ENCODE measurements at regions of chr11 and their contacts with region 1.

Region 1: GRCh38 chr11:12540913-12541582 is 133.2 kb upstream of the TEAD1 start:
- DNase-seq: peak; percentile 87
- H3K4me3 ChIP-seq: no peak overlapping the region; the same call in 1 of the 2 replicates
- H3K27ac ChIP-seq: peak overlapping the region; percentile 99
- H3K27me3 ChIP-seq: no peaks in the 10 kb centered on the region
- CTCF ChIP-seq: peak; percentile 65

Region 2: GRCh38 chr11:12478743-12479142 is 62.3 kb before region 1 on chr11:
- CTCF ChIA-PET with region 1: no interaction called
- POLR2A ChIA-PET with region 1: no interaction called
- DNase-seq: no peak
- H3K4me3 ChIP-seq: no peak overlapping the region
- H3K27ac ChIP-seq: no peak overlapping the region
- H3K27me3 ChIP-seq: no peaks in the 10 kb centered on the region
- CTCF ChIP-seq: no peak

Region 3: GRCh38 chr11:13183094-13183825 is 642.2 kb after region 1 on chr11:
- CTCF ChIA-PET with region 1: interaction called, 10 read pairs
- POLR2A ChIA-PET with region 1: no interaction called
- DNase-seq: no peak
- H3K4me3 ChIP-seq: peak overlapping the region; percentile 42
- H3K27ac ChIP-seq: no peak overlapping the region
- H3K27me3 ChIP-seq: no peaks in the 10 kb centered on the region
- CTCF ChIP-seq: peak; percentile 54